ENCODE measurements at regions of chr12 and their contacts with region 1.

Region 1: GRCh38 chr12:77925536-77926108 is 94.9 kb downstream of the NAV3 start:
- DNase-seq: peak; percentile 66
- ATAC-seq: peak; percentile 97

Region 2: GRCh38 chr12:77724367-77724957 is 201.2 kb before region 1 on chr12:
- intact Hi-C with region 1: loop called (anchors 5 kb)
- DNase-seq: no peak
- ATAC-seq: peak; percentile 84